IMR-90 (cell line): ENCODE measurements at regions of chr3 and their contacts with region 1.

Region 1: GRCh38 chr3:76912841-76913383 is 127.0 kb upstream of the ROBO2 start:
- DNase-seq: peak; percentile 6
- ATAC-seq: 0 out of 2 replicates have a peak, but pooled peaks have one; percentile 29
- H3K4me3 ChIP-seq: no peak overlapping the region
- H3K27ac ChIP-seq: no peak overlapping the region
- H3K4me1 ChIP-seq: no peaks in the 10 kb centered on the region
- H3K27me3 ChIP-seq: no peaks in the 10 kb centered on the region
- CTCF ChIP-seq: no peak
- POLR2A ChIP-seq: no peak
- RAD21 ChIP-seq: no peak

Region 2: GRCh38 chr3:76965122-76965725 is 52.3 kb after region 1 on chr3:
- CTCF ChIA-PET with region 1: no interaction called
- POLR2A ChIA-PET with region 1: interaction called, 10 read pairs
- dilution Hi-C with region 1: no loop called
- in situ Hi-C with region 1: no loop called
- intact Hi-C with region 1: no loop called
- DNase-seq: peak; percentile 18
- ATAC-seq: peak; percentile 79
- H3K4me3 ChIP-seq: no peak overlapping the region
- H3K27ac ChIP-seq: no peak overlapping the region
- H3K4me1 ChIP-seq: no peaks in the 10 kb centered on the region
- H3K27me3 ChIP-seq: no peaks in the 10 kb centered on the region
- CTCF ChIP-seq: no peak
- POLR2A ChIP-seq: no peak
- RAD21 ChIP-seq: no peak

Region 3: DNA sequence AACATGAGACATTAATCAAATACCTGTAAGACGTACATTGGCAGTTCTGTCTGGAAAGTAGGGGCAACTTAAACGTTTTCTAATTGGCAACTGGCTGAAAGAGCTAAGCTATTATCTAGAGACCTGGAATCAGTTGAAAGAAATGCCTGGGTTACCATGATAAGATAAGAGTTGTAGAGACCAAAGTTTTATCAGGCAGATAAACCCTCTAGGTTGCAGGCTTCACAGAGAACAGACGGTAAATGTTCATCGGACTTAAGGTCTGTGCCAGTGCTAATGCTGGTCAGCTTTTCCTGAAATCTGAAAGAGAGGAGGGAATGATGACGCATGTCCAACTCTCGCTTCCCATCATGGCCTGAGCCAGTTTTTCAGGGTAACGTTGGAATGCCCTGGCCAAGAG is 323.2 kb after region 1 on chr3:
- CTCF ChIA-PET with region 1: no interaction called
- POLR2A ChIA-PET with region 1: no interaction called
- dilution Hi-C with region 1: no loop called
- in situ Hi-C with region 1: no loop called
- intact Hi-C with region 1: no loop called
- DNase-seq: no peak
- ATAC-seq: no peak
- H3K4me3 ChIP-seq: no peak overlapping the region
- H3K27ac ChIP-seq: no peak overlapping the region
- H3K4me1 ChIP-seq: no peaks in the 10 kb centered on the region
- H3K27me3 ChIP-seq: no peaks in the 10 kb centered on the region
- CTCF ChIP-seq: no peak
- POLR2A ChIP-seq: no peak
- RAD21 ChIP-seq: no peak

Region 4: GRCh38 chr3:77707281-77707680 is 794.4 kb after region 1 on chr3:
- CTCF ChIA-PET with region 1: no interaction called
- POLR2A ChIA-PET with region 1: no interaction called
- dilution Hi-C with region 1: no loop called
- in situ Hi-C with region 1: no loop called
- intact Hi-C with region 1: no loop called
- DNase-seq: no peak
- ATAC-seq: no peak
- H3K4me3 ChIP-seq: no peak overlapping the region
- H3K27ac ChIP-seq: no peak overlapping the region
- H3K4me1 ChIP-seq: no peaks in the 10 kb centered on the region
- H3K27me3 ChIP-seq: no peaks in the 10 kb centered on the region
- CTCF ChIP-seq: no peak
- POLR2A ChIP-seq: no peak
- RAD21 ChIP-seq: no peak